Mammary epithelial cell (primary cell): ENCODE measurements at regions of chr9 and their contacts with region 1.

Region 1: DNA sequence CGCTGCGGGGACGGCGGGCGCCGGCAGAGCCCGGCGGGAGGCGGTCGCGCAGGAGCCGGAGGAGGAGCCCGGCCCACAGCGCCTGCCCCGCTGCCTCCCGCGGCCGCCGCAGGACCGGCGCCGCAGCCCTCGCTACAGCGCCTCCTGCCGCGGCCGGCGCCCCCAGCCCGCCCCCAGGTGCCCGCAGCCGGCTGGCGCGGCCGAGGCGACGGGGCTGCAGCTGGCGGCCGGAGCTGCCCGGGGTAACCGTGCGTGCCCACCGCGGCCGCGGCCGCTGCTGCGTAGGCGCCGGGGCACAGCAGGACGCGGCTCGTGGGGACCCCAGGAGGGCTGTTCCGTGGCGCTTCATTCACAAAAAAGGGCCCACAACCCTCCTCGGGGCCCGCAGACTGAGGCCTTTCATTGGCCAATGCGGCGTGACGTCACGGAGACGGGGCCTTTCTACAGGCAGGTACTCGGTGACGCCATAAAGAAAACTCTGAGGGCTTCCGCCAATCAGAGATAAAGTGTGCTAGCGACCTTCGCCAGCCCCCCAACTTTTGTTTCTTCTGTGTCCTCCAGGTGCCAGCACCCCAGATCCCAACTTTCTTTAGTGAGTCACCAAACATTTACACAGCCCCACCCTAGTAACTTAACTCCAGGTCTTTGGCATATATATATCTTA is at the start of gene CDC14B:
- DNase-seq: peak; percentile 88
- H3K4me3 ChIP-seq: peak within 1 kb of the TSS; percentile 66 to 70 (median 70)
- H3K27ac ChIP-seq: peak within 1 kb of the TSS; percentile 19
- H3K4me1 ChIP-seq: peaks cover 8% of the 10 kb centered on the region
- H3K27me3 ChIP-seq: no peaks in the 10 kb centered on the region
- CTCF ChIP-seq: peak in 1 of 2 donors; percentile 26
- total RNA-seq, gene CDC14B: 9.4 to 14.5 TPM

Region 2: DNA sequence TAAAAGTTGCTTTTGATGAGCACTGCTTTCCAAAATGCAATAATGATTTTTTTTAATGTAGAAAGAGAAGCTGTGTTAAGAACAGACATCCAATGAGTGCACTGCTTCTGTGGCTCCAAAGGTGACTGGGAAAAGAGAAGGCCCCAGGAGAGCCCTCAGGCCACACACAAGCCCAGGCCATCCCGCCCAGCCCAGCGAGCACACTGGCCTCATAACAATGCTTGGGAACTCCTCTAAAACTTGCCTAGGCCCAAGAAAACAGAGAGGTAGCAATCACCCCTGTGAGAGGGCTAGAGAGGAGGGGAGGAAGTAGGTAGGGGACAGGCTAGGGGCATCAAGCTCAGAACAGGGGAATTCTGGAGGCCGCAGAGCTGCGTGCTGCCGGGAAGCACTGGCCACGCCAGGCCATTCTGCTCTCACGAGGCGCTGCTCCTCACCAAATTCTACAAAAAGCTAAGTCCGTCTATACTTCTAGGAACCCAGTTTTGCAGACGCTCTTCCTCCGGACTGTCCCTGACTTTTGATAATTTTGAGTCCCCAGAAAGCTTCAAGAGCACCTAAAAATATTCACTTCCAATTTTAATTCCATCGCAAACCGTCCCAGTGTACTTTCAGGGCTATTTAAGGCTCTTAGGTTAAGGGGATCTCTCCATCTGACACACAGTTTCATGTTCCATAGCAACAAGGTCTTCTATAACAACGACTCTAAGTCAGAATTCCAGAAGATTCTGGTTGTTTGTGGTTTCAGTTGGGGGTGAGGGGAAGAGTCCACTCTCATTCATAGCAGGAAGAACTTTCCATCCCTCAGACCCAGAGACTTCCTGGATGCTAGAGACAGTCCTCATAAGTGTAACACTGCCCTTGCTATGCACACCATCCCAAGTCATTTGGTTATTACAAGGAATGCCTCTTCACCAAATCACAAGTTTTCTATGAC is 118.7 kb before region 1 on chr9:
- CTCF ChIA-PET with region 1: no interaction called
- dilution Hi-C with region 1: no loop called
- in situ Hi-C with region 1: no loop called
- intact Hi-C with region 1: loop called (anchors 2 kb)
- DNase-seq: no peak
- H3K4me3 ChIP-seq: no peak overlapping the region
- H3K27ac ChIP-seq: no peak overlapping the region
- H3K4me1 ChIP-seq: peaks cover under 1% of the 10 kb centered on the region
- H3K27me3 ChIP-seq: no peaks in the 10 kb centered on the region
- CTCF ChIP-seq: no peak